ENCODE measurements at regions of chr12 and their contacts with region 1.

Region 1: GRCh38 chr12:55700255-55701018 is 7.3 kb downstream of the ITGA7 start:
- DNase-seq: no peak
- ATAC-seq: no peak

Region 2: GRCh38 chr12:55681142-55682077 is 19.0 kb before region 1 on chr12:
- intact Hi-C with region 1: loop called (anchors 2 kb)
- DNase-seq: peak; percentile 78
- ATAC-seq: peak; percentile 79

Measured in Right ventricle myocardium inferior (tissue), 1 donor.